Tibial artery (tissue), 4 donors: ENCODE measurements at regions of chr19 and their contacts with region 1.

Region 1: GRCh38 chr19:18450931-18451845 is 13.3 kb upstream of the ISYNA1 start:
- DNase-seq: peak; percentile 83 to 92
- H3K4me3 ChIP-seq: no peak overlapping the region
- H3K27ac ChIP-seq: peak overlapping the region in 1 of 2 donors; percentile 7
- H3K4me1 ChIP-seq: peaks cover 0 to 12% (median 5%) of the 10 kb centered on the region in 4 donors
- H3K27me3 ChIP-seq: no peaks in the 10 kb centered on the region
- CTCF ChIP-seq: peak; percentile 97 to 98

Region 2: DNA sequence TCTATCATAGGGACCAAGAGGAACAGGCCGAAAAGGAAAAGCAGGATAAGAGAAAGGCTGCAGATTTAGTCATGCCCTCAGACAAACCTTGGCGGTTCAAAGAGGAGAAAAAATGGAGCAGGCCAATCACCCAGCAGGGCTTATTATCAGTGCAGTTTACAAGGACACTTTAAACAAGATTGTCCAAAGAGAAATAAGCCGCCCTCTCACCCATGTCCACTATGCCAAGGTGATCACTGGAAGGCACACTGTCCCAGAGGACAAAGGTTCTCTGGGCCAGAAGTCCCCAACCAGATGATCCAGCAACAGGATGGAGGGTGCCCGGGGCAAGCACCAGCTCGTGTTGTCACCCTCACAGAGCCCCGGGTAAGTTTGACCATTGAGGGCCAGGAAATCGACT is 129.1 kb after region 1 on chr19:
- intact Hi-C with region 1: loop called (anchors 5 kb)
- DNase-seq: no peak
- H3K4me3 ChIP-seq: no peak overlapping the region
- H3K27ac ChIP-seq: no peak overlapping the region
- H3K4me1 ChIP-seq: no peaks in the 10 kb centered on the region
- H3K27me3 ChIP-seq: no peaks in the 10 kb centered on the region
- CTCF ChIP-seq: no peak